ENCODE measurements at regions of chr11 and their contacts with region 1.

Region 1: GRCh38 chr11:76318744-76319384 is 62.1 kb downstream of the THAP12 start:
- DNase-seq: peak; percentile 85
- H3K4me3 ChIP-seq: no peak overlapping the region
- H3K27ac ChIP-seq: no peak overlapping the region
- H3K4me1 ChIP-seq: no peaks in the 10 kb centered on the region
- H3K27me3 ChIP-seq: peaks cover 9% of the 10 kb centered on the region
- CTCF ChIP-seq: peak; percentile 77

Region 2: GRCh38 chr11:75896843-75897419 is 421.9 kb before region 1 on chr11:
- intact Hi-C with region 1: loop called (anchors 5 kb)
- DNase-seq: no peak
- H3K4me3 ChIP-seq: no peak overlapping the region
- H3K27ac ChIP-seq: no peak overlapping the region
- H3K4me1 ChIP-seq: no peaks in the 10 kb centered on the region
- H3K27me3 ChIP-seq: no peaks in the 10 kb centered on the region
- CTCF ChIP-seq: peak; percentile 67

Region 3: DNA sequence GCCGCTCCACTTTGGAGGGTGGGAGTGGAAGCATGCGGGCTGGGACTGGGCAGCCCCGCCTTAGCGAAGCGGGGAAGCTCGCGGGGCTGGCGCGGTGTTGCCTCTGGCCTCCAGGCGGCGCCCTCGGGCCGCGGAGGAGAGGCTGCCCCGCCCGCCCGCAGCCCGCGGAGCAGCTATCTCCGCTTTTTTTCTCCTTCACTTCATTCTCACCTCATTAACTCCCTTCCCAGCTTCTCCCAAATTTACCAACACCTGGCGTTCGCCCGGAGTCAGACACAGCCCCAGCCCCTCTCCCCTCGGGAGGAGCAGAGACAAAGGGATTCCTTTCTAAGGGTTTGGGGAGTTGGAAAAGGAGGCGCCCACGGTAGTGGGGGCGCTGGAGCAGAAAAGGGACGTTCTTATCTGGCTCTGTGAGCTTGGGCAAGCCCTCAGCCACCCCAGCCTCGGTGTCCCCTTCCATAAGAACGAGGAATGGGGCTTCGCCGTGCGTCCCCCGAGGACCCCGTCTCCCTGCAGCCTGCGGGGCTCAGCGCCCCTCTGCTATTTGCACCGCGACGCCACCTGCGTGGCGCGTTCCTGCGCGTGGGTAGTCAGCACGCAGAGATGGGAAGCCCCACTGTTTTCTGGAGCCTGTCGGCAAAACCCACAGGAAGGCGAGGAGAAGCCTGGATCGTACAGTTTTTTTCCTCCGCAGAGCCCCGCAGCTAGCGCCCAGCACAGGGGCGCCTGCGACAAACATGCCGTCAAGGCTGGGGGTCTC is 111.0 kb before region 1 on chr11:
- intact Hi-C with region 1: loop called (anchors 2 kb)
- DNase-seq: peak; percentile 86
- H3K4me3 ChIP-seq: peak overlapping the region; percentile 71
- H3K27ac ChIP-seq: no peak overlapping the region
- H3K4me1 ChIP-seq: peaks cover 27% of the 10 kb centered on the region
- H3K27me3 ChIP-seq: peaks cover 47% of the 10 kb centered on the region
- CTCF ChIP-seq: peak; percentile 98

Measured in colonic mucosa (tissue), 4 donors.